Heart left ventricle (tissue), 16 donors: ENCODE measurements at regions of chr4 and their contacts with region 1.

Region 1: GRCh38 chr4:159446266-159446976 is 343.5 kb downstream of the RAPGEF2 start:
- DNase-seq: peak in 4 of 5 donors; percentile 21 to 41 (median 36)
- ATAC-seq: peak; percentile 94 to 98 (median 97)
- H3K4me3 ChIP-seq: no peak overlapping the region
- H3K27ac ChIP-seq: peak overlapping the region in 3 of 12 donors; percentile 2 to 46 (median 39)
- H3K4me1 ChIP-seq: peaks cover 0 to 15% (median 8%) of the 10 kb centered on the region in 12 donors
- H3K27me3 ChIP-seq: no peaks in the 10 kb centered on the region
- CTCF ChIP-seq: peak; percentile 82 to 96 (median 91)
- POLR2A ChIP-seq: no peak

Region 2: DNA sequence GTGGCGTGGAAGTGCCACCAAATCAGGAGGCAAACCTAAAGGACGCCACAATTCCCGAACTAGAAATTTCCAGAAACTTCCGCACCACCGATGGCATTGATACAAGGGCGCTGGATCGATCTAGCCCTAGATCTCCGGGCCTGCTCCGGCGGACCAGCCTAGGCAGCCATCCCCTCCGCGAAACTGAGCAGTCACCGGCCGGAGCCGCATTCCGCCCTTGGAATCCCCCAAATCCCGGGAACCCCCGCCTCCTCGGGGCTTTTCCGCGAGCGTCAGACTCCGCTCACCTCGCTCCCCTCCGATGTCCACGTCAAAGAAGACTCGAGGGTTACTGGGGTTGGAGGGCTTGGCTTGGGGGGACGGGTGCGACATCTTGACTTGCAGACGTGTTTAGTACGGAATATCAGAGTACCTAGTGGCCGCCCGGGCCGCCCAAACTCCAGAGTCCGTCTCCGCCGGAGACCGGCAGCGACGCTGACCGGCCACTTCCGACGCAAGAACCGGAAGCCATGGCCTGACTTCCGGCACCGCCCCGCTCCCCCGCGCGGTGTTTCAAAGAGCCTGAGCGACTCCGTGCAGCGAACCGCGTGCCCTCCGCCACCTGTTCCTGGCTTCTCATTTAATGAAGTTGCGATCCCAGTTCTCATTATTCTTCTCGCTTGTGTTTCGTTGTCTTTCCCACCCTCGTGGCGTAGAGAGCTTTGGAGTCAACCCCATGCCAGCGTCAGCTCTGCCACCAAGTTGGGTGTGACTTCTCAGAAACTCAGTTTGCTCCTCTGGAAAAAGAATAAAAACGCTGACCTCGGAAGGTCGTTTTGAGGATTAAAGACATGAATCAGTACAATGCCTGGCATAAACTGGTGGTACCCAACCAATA is 723.3 kb before region 1 on chr4 and contains the start of gene PPID:
- intact Hi-C with region 1: loop called in 5 of 10 experiments (anchors 5 to 10 kb)
- DNase-seq: peak; percentile 86 to 92 (median 89)
- ATAC-seq: peak; percentile 91 to 98 (median 98)
- H3K4me3 ChIP-seq: peak within 1 kb of the TSS; percentile 70 to 95 (median 85)
- H3K27ac ChIP-seq: peak within 1 kb of the TSS; percentile 76 to 96 (median 94)
- H3K4me1 ChIP-seq: peaks cover 0 to 18% (median 12%) of the 10 kb centered on the region in 12 donors
- H3K27me3 ChIP-seq: no peaks in the 10 kb centered on the region
- CTCF ChIP-seq: no peak
- POLR2A ChIP-seq: peak in 1 of 2 donors; percentile 70
- total RNA-seq, gene PPID: 24.1 to 43.4 (median 30.7) TPM

Region 3: GRCh38 chr4:158856852-158857251 is 589.6 kb before region 1 on chr4:
- intact Hi-C with region 1: loop called (anchors 2 to 10 kb)
- DNase-seq: no peak
- ATAC-seq: peak; percentile 18 to 68 (median 60)
- H3K4me3 ChIP-seq: no peak overlapping the region
- H3K27ac ChIP-seq: no peak overlapping the region
- H3K4me1 ChIP-seq: peaks cover 0 to 16% (median 0%) of the 10 kb centered on the region in 12 donors
- H3K27me3 ChIP-seq: no peaks in the 10 kb centered on the region
- CTCF ChIP-seq: peak; percentile 39 to 71 (median 59)
- POLR2A ChIP-seq: no peak

Region 4: DNA sequence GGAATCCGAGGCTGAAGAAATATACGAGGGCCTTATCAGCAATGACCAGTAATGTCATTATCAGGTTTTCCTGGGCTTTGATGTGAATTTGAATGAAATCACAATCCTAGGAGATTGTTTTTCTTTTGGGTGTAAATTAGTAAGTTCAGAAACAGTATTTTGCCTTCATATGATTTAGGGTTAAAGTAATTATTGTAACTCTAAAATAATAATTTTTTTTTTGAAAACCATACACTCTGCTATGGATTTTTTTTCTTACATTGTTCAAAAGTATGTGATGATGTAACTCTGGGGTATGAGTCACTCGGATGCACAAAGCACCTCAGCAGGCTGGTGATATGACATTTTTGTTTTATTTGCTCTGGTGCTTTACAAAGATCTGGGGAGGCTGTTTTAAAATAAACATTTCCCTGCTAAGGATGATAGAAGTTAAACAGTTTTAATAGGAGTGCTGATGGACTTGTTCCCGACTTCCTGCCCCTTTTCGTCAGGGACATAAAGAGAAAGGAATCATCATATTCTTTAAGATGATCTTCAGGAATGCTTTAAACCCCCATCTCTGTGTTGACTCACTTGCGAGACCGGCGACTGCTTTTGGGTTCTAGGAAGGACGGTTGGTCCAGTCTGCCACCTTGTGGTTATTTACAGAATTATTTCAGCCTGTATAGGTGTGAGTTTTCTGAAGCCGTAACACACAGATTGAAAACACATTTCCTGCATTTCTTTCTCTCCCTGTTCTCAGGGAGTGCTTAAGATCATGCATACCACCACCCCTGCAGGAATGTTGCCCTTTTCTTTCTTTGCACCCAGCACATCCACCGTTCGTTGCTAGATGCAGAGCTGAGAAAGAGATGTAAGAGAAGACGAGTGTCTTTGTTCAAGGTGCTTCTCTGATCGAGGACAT is 271.1 kb before region 1 on chr4:
- intact Hi-C with region 1: loop called in 1 of 10 experiments (anchors 10 kb)
- DNase-seq: peak in 4 of 5 donors; percentile 58 to 74 (median 66)
- ATAC-seq: peak; percentile 69 to 90 (median 88)
- H3K4me3 ChIP-seq: peak overlapping the region in 7 of 12 donors; percentile 4 to 19 (median 16)
- H3K27ac ChIP-seq: peak overlapping the region in 11 of 12 donors; percentile 13 to 75 (median 50)
- H3K4me1 ChIP-seq: peaks cover 11 to 98% (median 85%) of the 10 kb centered on the region in 12 donors
- H3K27me3 ChIP-seq: no peaks in the 10 kb centered on the region
- CTCF ChIP-seq: peak; percentile 69 to 89 (median 84)
- POLR2A ChIP-seq: no peak

Region 5: DNA sequence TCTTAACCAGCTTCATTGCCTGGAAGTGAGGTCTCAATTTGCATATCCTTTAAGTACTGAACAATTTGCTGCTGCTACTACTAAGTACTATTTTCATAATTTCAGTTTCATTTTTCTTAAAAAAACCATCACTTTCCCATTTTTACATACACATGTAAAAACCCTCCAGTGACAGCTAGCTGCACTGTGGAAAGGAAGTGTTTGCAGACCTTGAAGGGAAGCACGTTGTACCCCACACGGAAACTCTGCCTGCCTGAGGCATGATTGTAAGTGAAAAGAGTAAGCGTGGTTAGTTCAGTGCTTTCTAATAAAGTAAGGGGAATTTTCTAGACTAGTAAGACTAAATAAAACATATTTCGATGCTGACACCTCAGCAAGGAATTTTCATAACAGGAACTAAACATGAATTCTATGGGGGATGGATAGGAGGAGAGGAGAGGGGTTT is 240.0 kb before region 1 on chr4:
- intact Hi-C with region 1: loop called (anchors 2 to 10 kb)
- DNase-seq: no peak
- ATAC-seq: no peak
- H3K4me3 ChIP-seq: no peak overlapping the region
- H3K27ac ChIP-seq: peak overlapping the region in 4 of 12 donors; percentile 8 to 51 (median 36)
- H3K4me1 ChIP-seq: peaks cover 9 to 86% (median 47%) of the 10 kb centered on the region in 12 donors
- H3K27me3 ChIP-seq: no peaks in the 10 kb centered on the region
- CTCF ChIP-seq: no peak
- POLR2A ChIP-seq: no peak

Region 6: DNA sequence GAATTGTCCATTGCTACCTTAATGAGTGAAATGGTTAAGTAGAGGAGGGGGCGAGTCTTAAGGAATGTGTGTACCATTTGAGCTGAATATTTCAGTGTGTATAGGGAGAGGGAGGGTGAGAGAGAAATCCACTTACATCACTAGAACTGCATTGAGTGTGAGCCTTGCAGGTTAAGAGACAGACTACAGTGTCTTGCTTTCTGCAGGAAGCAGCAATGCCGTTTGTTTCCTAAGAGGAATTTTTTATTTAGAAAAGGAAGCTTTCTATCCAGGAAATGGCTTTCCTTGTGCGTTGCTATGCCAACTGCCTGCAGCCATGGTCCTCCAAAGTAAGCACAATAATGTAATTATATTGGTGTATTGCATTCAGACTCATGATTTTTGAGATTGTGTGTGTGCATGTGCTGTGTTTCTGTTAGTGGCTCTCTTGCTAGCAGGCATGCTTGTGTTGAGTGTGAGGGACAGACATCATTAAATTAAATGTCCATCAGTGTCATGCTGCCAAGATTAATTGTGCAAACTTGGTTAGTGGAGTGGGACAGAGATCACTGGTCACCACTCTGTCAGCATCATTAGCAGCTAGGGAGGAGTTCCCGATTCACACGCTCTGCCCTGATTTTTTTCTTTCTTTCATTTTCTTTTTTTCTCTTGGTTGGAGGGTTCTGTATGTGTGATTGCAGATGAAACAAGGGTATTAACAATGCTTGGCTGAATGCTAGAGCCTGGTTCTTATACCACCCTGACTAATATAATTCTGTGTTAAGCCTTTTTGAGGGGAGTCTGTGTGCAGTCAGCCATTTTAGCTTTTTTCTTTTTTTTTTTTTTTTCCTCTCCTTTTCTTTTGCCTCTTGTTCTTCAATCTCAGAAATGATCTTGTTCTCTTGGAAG is 179.2 kb before region 1 on chr4:
- intact Hi-C with region 1: no loop called
- DNase-seq: no peak
- ATAC-seq: peak; percentile 29 to 70 (median 48)
- H3K4me3 ChIP-seq: peak overlapping the region in 11 of 12 donors; percentile 4 to 46 (median 34)
- H3K27ac ChIP-seq: peak overlapping the region in 11 of 12 donors; percentile 25 to 65 (median 55)
- H3K4me1 ChIP-seq: peaks cover 4 to 95% (median 60%) of the 10 kb centered on the region in 12 donors
- H3K27me3 ChIP-seq: no peaks in the 10 kb centered on the region
- CTCF ChIP-seq: no peak
- POLR2A ChIP-seq: no peak

Region 7: DNA sequence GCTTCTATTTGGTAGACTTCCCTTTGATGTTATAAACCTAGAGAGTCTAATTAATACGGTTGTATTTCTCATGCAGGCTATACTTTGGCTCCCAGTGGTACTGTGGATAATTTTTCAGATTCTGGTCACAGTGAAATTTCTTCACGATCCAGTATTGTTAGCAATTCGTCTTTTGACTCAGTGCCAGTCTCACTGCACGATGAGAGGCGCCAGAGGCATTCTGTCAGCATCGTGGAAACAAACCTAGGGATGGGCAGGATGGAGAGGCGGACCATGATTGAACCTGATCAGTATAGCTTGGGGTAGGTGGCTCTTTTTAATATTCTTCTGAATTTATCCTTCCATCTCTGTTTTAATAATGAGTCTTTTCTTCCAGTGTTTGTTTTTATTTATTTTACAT is 93.8 kb before region 1 on chr4:
- intact Hi-C with region 1: loop called in 5 of 10 experiments (anchors 5 to 10 kb)
- DNase-seq: no peak
- ATAC-seq: peak in 3 of 4 donors; percentile 37 to 55 (median 53)
- H3K4me3 ChIP-seq: no peak overlapping the region
- H3K27ac ChIP-seq: peak overlapping the region in 4 of 12 donors; percentile 3 to 58 (median 36)
- H3K4me1 ChIP-seq: peaks cover 0 to 40% (median 6%) of the 10 kb centered on the region in 12 donors
- H3K27me3 ChIP-seq: no peaks in the 10 kb centered on the region
- CTCF ChIP-seq: no peak
- POLR2A ChIP-seq: no peak

Region 8: DNA sequence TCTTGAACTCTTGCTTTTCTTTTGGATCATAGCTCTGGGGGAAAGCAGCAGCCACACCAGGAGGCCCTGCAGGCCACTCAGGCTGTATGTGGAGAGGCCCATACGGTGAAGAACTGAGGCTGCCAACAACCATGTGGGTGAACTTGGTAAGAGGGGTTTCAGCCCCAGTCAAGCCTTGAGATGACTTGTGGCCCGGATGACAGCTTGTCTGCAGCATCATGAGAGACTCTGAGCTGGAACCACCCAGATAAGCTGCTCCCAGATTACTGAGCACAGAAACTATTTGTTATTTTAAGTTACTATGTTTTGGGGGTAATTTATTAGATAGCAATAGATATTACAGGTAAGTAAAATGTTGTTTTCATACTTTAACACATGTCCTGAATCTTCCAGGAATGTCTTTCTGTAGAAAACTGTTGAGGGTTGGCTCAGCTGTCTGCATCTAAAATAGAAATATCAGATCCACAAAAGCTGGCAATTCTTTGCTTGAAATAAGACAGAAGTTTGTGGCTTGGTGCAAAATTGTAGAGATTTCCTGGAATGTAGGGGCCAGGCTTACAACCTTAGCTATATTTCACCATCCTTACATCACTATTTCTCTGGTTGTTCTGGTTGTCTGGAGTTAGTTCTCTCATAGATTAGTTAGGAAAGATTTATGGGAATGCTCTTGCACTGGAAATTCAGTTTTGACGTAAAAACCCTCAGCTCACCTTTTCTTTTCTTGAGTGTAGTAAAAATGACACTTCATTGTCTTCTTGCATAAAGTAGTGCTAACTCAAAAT is 71.5 kb before region 1 on chr4:
- intact Hi-C with region 1: loop called in 1 of 10 experiments (anchors 10 kb)
- DNase-seq: no peak
- ATAC-seq: no peak
- H3K4me3 ChIP-seq: no peak overlapping the region
- H3K27ac ChIP-seq: no peak overlapping the region
- H3K4me1 ChIP-seq: peaks cover 0 to 12% (median 0%) of the 10 kb centered on the region in 12 donors
- H3K27me3 ChIP-seq: no peaks in the 10 kb centered on the region
- CTCF ChIP-seq: no peak
- POLR2A ChIP-seq: no peak

Region 9: DNA sequence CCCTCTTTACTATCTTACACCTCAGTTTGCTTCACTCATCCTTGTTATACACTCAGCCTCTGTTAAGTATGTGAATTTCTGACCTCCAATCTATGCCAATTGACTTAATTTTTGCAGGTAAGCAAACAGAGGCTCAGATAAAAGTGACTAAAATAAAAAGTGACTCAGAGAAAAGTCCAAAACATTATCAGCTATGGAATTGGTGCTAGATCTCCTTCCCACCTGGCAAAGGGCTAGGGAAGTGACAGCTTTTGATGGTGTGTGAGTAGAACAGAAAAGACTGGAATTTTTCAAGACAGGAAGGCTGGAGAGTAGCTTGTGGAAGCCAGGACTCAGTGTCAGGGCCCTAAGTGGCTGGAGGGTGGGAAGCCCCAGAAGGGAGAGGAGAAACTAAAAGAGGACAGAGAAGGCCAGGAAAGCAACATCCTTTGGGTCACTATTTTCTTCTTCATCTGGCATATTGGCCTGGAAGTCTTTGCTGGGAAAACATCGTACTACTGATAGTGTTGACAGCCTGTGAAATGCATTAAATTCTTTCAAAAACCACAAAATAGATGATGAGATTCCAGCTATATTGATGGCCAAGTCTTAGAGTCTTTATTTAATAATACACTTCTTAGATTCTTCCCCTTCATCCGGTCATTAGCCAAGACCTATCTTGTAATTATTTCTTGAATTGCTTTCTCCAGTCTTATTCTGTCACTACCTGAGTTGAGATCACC is 49.3 kb after region 1 on chr4:
- intact Hi-C with region 1: no loop called
- DNase-seq: no peak
- ATAC-seq: no peak
- H3K4me3 ChIP-seq: no peak overlapping the region
- H3K27ac ChIP-seq: no peak overlapping the region
- H3K4me1 ChIP-seq: peaks cover 0 to 13% (median 0%) of the 10 kb centered on the region in 12 donors
- H3K27me3 ChIP-seq: no peaks in the 10 kb centered on the region
- CTCF ChIP-seq: no peak
- POLR2A ChIP-seq: no peak

Region 10: GRCh38 chr4:159547645-159548308 is 101.4 kb after region 1 on chr4:
- intact Hi-C with region 1: no loop called
- DNase-seq: no peak
- ATAC-seq: no peak
- H3K4me3 ChIP-seq: no peak overlapping the region
- H3K27ac ChIP-seq: no peak overlapping the region
- H3K4me1 ChIP-seq: no peaks in the 10 kb centered on the region
- H3K27me3 ChIP-seq: peaks cover 0 to 7% (median 0%) of the 10 kb centered on the region in 9 donors
- CTCF ChIP-seq: no peak
- POLR2A ChIP-seq: no peak